Breast epithelium (tissue), 4 donors: ENCODE measurements at regions of chr6 and their contacts with region 1.

Region 1: DNA sequence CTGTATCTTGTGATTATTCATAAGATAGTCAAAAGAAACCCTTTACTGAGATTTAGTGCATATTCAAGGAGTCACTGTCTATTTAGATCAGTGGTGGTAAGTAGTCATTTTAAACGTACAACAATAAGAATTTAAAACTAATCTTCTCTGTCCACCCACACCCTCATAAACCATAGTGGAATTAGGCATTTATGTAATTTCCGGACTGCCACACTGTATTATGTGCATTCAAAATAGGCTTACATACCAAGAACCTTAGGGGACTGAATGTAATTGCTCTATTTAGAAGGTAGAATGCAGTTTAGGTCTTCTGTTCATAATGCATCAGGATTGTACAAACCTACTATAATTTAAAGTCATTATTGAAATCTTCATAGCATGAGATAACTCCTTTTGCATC is 685.4 kb downstream of the TENT5A start:
- DNase-seq: no peak
- H3K4me3 ChIP-seq: no peak overlapping the region
- H3K27ac ChIP-seq: no peak overlapping the region
- H3K4me1 ChIP-seq: no peaks in the 10 kb centered on the region
- H3K27me3 ChIP-seq: no peaks in the 10 kb centered on the region
- CTCF ChIP-seq: no peak
- POLR2A ChIP-seq: no peak

Region 2: GRCh38 chr6:81138236-81138635 is 71.2 kb after region 1 on chr6:
- intact Hi-C with region 1: loop called (anchors 2 kb)
- DNase-seq: no peak
- H3K4me3 ChIP-seq: no peak overlapping the region
- H3K27ac ChIP-seq: no peak overlapping the region
- H3K4me1 ChIP-seq: no peaks in the 10 kb centered on the region
- H3K27me3 ChIP-seq: no peaks in the 10 kb centered on the region
- CTCF ChIP-seq: no peak
- POLR2A ChIP-seq: no peak